Right cardiac atrium (tissue), 5 donors: ENCODE measurements at regions of chr3 and their contacts with region 1.

Region 1: DNA sequence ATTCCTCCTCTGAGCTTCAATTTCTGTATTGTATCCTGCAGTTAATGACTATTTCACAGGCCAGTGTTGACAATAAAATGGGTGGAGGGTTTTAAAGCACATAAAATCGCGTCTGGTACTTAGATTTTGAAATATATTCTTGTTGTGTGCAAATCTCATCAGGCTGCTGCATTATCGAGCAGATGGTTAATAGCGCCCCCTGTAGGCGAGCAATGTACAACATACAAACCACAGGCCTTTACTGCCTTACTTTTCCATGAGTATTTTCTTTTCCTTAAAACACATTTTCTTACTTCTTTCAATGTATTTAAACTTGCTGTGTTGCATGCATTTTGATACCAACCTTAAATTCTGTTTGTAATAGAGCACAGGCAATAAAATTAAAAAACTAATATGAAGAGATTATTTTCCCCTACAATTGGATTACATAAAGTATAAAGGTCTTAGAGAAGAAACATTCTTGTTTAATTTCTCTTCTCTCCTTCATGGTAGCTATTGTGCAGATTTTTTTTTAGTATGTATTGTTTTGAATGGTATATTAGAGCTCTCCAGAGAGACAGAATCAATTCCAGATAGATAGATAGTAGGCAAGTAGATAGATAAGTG is 608.4 kb downstream of the CADM2 start:
- DNase-seq: peak; percentile 49 to 65 (median 53)
- ATAC-seq: no peak
- H3K4me3 ChIP-seq: no peak overlapping the region
- H3K27ac ChIP-seq: no peak overlapping the region
- H3K4me1 ChIP-seq: no peaks in the 10 kb centered on the region
- H3K27me3 ChIP-seq: no peaks in the 10 kb centered on the region

Region 2: GRCh38 chr3:85068911-85069310 is 498.3 kb before region 1 on chr3:
- intact Hi-C with region 1: no loop called
- DNase-seq: no peak
- ATAC-seq: no peak
- H3K4me3 ChIP-seq: no peak overlapping the region
- H3K27ac ChIP-seq: no peak overlapping the region
- H3K4me1 ChIP-seq: no peaks in the 10 kb centered on the region
- H3K27me3 ChIP-seq: no peaks in the 10 kb centered on the region

Region 3: DNA sequence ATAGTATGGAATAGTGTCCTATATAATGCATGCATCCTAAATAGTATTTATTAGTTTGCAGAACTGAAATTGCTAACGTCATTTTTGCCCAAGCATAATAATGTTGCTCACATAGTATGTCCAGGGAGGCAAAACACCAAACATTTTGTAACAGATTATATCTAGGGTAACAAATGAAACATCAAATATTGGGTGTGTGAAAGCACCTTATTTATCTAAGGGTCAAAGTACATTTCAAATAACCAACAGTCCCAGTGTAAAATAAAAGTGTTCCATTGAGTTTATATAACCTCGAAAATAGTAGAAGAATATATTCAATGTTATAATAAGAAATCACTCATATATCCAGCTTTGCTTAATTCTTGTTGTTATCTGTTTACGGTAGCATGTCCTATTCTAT is 245.3 kb before region 1 on chr3:
- intact Hi-C with region 1: loop called in 1 of 4 experiments (anchors 10 kb)
- DNase-seq: no peak
- ATAC-seq: no peak
- H3K4me3 ChIP-seq: no peak overlapping the region
- H3K27ac ChIP-seq: no peak overlapping the region
- H3K4me1 ChIP-seq: no peaks in the 10 kb centered on the region
- H3K27me3 ChIP-seq: no peaks in the 10 kb centered on the region

Region 4: GRCh38 chr3:85406499-85406898 is 160.7 kb before region 1 on chr3:
- intact Hi-C with region 1: no loop called
- DNase-seq: no peak
- ATAC-seq: no peak
- H3K4me3 ChIP-seq: no peak overlapping the region
- H3K27ac ChIP-seq: no peak overlapping the region
- H3K4me1 ChIP-seq: no peaks in the 10 kb centered on the region
- H3K27me3 ChIP-seq: no peaks in the 10 kb centered on the region